Vagina (tissue), 2 donors: ENCODE measurements at regions of chr2 and their contacts with region 1.

Region 1: DNA sequence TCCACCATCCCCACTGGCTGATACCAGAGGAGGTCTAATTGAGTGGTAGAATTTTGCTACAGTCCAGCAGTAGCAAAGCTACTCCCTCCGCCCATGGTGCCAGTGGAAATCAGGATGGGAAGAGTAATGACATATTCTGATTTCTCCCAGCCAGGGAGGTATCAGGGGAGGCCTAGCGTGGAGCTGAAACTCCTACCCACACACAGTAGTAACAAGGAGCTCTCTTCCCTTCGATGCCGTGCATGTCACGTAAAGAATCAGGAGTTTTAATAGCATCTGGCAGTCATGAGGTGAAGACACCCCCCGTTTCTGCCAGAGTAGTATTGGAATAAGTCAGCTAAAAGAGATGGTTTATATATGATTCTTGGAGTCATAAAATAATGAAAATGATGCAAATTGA is 786.8 kb upstream of the DDX18 start:
- DNase-seq: no peak
- H3K4me3 ChIP-seq: no peak overlapping the region
- H3K27ac ChIP-seq: no peak overlapping the region
- H3K4me1 ChIP-seq: no peaks in the 10 kb centered on the region
- H3K27me3 ChIP-seq: no peaks in the 10 kb centered on the region
- CTCF ChIP-seq: no peak
- POLR2A ChIP-seq: no peak

Region 2: DNA sequence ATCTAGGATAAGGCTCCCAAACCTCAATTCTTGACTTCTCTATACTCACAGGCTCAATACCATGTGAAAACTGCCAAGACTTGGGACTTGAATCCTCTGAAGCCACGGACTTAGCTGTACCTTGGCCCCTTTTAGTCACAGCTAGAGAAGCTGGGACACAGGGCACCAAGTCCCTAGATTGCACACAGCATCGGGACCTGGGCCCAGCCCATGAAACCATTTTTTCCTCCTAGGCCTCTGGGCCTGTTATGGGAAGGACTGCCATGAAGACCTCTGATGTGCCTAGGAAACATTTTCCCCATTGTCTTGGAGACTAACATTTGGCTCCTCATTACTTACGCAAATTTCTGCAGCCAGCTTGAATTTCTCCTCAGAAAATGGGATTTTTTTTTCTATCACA is 225.0 kb before region 1 on chr2:
- intact Hi-C with region 1: no loop called
- DNase-seq: no peak
- H3K4me3 ChIP-seq: no peak overlapping the region
- H3K27ac ChIP-seq: no peak overlapping the region
- H3K4me1 ChIP-seq: no peaks in the 10 kb centered on the region
- H3K27me3 ChIP-seq: no peaks in the 10 kb centered on the region
- CTCF ChIP-seq: no peak
- POLR2A ChIP-seq: no peak

Region 3: DNA sequence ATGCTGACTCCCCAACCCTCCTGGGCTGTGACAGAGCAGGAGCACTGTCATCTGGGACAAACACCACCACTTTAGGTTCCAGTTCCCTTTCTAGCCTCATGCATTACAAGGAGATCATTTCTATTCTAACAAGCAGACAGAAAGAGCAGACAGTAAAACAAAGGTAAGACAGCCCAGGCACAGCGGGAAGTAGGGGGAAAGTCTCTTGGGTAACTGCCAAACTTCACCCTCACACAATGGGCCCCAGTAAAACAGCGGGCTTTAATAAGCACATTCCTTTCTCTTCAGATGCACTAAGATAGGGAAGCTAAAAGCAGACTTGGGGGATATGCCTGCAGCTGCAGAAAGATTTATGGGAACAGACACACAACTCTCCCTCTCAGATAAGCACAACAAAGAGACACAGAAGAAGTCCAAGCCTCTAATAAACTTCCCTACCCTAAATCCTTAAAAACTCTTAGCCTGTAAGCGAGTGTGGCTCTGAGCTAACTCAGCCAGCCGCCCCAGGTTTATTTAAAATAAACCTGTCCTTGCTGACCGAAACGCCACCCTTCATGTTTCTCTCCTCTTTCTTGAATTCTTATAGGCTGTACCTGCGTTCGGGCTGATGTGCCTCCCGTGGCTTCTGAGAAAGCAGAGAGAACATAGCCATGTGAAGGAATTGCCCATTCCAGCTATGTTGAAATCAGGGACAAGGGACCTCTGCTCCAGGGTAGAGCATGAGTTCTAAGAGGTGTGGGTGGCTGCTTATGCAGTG is 60.1 kb after region 1 on chr2:
- intact Hi-C with region 1: no loop called
- DNase-seq: no peak
- H3K4me3 ChIP-seq: no peak overlapping the region
- H3K27ac ChIP-seq: no peak overlapping the region
- H3K4me1 ChIP-seq: no peaks in the 10 kb centered on the region
- H3K27me3 ChIP-seq: no peaks in the 10 kb centered on the region
- CTCF ChIP-seq: no peak
- POLR2A ChIP-seq: no peak

Region 4: DNA sequence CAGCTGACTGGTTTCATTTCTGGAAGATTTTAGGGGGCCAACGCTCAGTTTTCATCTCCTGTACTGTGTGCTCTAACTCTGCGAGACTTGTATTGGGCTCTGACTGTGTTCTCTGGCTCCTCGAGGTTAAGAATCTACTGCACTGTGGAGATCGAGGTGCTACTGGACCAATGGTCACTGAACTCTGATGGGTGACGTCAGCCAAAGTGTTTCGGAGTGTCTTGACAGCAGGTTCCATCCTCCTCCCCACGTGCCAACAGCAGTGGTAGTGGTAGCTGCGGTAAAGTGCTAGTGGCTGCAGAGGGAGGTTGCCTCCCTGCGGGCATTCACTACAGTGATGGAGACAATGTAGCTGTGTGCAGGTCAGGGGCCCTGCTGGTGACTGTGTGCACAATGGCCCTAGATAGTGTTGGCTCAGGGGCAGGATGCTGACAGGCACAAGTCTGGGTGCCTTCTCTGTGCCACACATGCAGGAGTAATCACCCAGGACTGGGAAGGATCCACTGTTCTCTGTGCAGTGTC is 81.2 kb after region 1 on chr2:
- intact Hi-C with region 1: no loop called
- DNase-seq: no peak
- H3K4me3 ChIP-seq: no peak overlapping the region
- H3K27ac ChIP-seq: no peak overlapping the region
- H3K4me1 ChIP-seq: no peaks in the 10 kb centered on the region
- H3K27me3 ChIP-seq: no peaks in the 10 kb centered on the region
- CTCF ChIP-seq: no peak
- POLR2A ChIP-seq: no peak

Region 5: DNA sequence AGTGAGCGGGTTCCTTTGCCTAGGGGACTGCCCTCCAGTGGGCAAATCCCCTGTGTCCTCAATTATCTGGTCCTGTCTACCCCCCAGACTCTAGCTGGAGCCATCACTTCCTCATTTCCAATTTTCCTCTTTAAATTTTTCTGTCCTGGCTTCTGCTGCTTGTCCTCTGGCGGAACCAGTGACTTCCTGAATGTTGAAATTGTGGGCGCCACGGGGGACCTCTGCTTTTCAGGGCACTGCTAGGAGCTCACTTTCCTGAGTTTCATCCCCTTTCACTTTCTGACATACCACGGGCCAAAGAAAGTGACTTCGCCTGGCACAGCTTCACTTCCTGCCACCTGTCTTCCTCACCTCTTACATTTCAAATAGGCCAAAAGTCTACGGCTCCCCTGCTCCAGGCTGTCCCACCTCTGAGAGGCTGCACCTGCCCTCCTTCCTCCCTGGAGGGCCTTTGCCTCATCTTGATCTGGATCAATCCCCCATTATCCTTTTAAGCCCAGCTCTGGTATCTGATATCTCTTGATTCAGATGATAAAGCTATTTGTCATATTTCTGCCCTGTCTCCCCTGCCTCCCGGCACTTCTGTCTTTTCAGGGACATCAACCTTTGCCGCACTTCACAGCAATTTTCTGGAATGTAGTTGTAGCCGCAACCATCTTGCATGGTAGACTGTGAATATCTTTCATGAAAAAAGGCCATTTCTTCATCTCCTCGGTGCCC is 1913.0 kb after region 1 on chr2:
- intact Hi-C with region 1: loop called (anchors 10 kb)
- DNase-seq: no peak
- H3K4me3 ChIP-seq: no peak overlapping the region
- H3K27ac ChIP-seq: no peak overlapping the region
- H3K4me1 ChIP-seq: no peaks in the 10 kb centered on the region
- H3K27me3 ChIP-seq: no peaks in the 10 kb centered on the region
- CTCF ChIP-seq: no peak
- POLR2A ChIP-seq: no peak